ENCODE measurements at regions of chr2 and their contacts with region 1.

Region 1: GRCh38 chr2:118221666-118222594 is 133.7 kb downstream of the INSIG2 start:
- DNase-seq: peak; percentile 60
- H3K4me3 ChIP-seq: no peak overlapping the region
- H3K27ac ChIP-seq: no peak overlapping the region
- H3K4me1 ChIP-seq: peaks cover 4% of the 10 kb centered on the region
- CTCF ChIP-seq: peak; percentile 91

Region 2: DNA sequence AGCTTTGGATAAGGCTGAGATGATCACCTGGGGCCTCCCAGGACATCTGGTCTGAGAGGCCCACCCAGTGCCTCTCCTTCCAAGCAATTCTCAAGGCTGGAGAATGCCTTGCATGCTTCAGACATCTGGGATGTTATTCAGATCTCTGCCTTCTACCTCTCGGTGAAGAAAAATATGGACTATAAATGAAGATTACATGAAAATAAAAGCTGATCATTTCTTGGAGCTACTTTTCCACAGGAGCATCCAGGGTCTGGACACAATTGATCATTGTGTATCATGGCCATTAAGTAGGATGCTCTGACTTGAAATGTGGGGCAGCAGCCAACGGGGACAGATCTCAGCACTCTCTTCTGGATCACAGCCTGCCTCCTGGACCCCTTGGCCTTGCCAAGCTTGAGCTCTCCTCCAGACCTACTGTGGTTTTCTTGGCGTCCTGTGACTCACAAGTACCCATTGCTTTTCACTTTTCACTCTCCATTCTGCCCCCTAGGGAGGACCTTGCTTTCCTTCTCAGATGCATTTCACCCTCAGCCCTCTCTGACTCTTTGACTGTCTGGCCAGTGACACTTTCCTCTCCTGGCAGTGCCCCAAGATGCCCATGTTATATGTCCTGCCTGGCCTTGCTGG is 69.4 kb after region 1 on chr2:
- CTCF ChIA-PET with region 1: no interaction called
- POLR2A ChIA-PET with region 1: no interaction called
- intact Hi-C with region 1: no loop called
- DNase-seq: no peak
- H3K4me3 ChIP-seq: no peak overlapping the region
- H3K27ac ChIP-seq: no peak overlapping the region
- H3K4me1 ChIP-seq: no peaks in the 10 kb centered on the region
- CTCF ChIP-seq: no peak

Region 3: DNA sequence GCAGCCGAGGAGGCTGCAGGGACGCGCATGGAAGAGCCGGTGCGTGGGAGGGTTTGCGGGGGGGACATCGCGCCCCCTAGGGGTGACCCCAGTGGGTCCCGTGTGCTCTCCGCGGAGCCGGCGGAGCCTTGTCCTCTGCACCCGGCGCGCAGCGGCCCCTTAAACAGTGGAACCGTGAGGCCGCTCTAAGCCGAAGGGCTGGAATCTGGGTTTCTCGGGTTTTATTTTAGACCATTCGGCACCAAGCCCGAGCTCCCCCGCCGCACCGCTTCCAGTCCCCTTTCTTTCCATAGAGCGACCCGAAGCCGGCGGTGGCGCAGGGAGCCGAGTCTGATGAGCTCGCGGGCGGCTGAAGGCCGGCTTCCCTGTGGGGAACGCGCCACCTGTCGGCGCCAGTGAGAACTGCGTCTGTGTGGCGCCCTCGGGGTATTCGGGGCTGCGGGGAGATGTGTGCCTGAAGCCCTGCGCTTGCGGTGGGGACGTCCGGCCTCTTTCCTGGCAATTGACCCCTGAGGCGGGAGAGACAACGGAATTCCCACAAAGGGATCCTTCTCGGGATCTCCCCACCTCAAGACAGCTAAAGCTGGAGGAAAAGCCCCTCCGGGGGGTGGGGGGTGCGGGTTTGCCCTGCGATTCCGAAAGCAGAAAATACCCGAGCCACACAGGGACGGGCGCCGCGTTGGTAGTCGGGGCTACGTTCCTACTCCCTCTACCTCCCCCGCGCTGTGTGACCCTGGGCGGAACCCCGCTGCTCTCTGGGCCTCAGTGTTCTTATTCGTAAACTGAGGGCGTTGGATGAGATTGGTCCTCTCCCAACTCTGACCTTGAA is 633.7 kb after region 1 on chr2:
- CTCF ChIA-PET with region 1: no interaction called
- POLR2A ChIA-PET with region 1: no interaction called
- intact Hi-C with region 1: loop called (anchors 2 kb)
- DNase-seq: peak; percentile 70
- H3K4me3 ChIP-seq: peak overlapping the region; percentile 39
- H3K27ac ChIP-seq: no peak overlapping the region
- H3K4me1 ChIP-seq: no peaks in the 10 kb centered on the region
- CTCF ChIP-seq: peak; percentile 90

Region 4: DNA sequence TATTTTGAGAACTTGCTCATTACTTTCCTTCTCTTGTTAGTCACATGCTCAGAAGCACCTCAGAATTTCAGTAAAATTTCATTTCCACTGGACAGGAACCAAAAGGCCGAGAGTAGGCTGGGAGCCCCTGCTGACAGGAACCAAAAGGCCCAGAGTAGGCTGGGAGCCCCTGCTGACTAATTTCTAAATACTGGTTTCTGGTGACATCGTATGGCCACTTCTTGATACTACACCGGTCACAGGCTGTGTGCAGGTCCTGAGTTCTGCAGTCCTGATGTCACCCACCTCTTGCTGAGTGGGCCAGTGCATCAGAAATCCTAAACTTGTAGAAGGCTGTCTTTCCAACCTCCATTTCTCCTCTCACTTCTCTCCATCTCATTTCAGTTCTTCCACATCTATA is 643.2 kb after region 1 on chr2:
- CTCF ChIA-PET with region 1: no interaction called
- POLR2A ChIA-PET with region 1: no interaction called
- intact Hi-C with region 1: loop called (anchors 2 kb)
- DNase-seq: peak; percentile 55
- H3K4me3 ChIP-seq: no peak overlapping the region
- H3K27ac ChIP-seq: no peak overlapping the region
- H3K4me1 ChIP-seq: no peaks in the 10 kb centered on the region
- CTCF ChIP-seq: peak; percentile 78

Measured in OCI-LY7 (cell line).